ENCODE measurements at regions of chr16 and their contacts with region 1.

Region 1: GRCh38 chr16:30183233-30184095 is at the start of gene CORO1A:
- DNase-seq: peak; percentile 91
- ATAC-seq: peak; percentile 32
- H3K4me3 Mint-ChIP-seq: peak within 1 kb of the TSS; percentile 100
- H3K27ac Mint-ChIP-seq: peak within 1 kb of the TSS; percentile 100
- H3K4me1 Mint-ChIP-seq: peaks cover 29% of the 10 kb centered on the region
- H3K27me3 Mint-ChIP-seq: no peaks in the 10 kb centered on the region
- total RNA-seq, gene CORO1A: 1,426 to 1,488 TPM

Region 2: DNA sequence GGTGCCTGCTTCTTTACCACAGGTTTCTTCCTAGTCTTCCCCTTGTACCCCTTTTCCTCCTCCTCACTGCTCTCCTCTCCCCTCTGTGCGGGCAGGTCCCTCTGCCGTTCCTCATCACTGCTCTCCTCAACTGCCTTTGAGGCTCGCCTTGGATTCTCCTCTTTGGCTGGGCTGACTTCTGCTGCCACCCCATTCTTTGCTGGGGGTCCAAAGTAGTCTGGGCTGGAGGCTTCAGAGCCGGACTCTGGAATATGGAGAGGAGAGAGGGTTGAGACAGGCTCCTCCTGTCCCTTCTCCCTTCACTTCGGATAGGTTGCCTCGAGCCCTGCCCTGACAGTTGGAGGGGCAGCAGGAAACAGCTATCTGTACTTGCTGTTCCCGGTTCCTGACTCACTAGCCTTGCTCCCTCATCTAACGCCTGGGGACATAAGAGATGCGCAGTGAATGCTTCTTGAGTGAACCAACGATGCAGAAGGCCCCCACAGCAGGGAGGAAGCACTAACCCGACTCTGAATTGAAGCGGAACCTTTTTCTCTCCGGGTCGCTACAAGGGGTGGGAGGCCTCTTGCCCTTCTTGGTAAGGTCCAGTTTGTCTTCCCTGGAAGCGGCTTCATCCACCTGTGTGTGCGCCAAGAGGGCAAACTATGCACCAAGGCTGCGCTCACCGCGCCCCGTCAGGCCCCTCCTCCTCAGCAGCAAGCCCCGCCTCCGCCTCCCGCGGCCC is 188.7 kb before region 1 on chr16:
- POLR2A ChIA-PET with region 1: no interaction called
- DNase-seq: peak; percentile 85
- ATAC-seq: peak; percentile 54
- H3K4me3 Mint-ChIP-seq: peak overlapping the region; percentile 98
- H3K27ac Mint-ChIP-seq: peak overlapping the region; percentile 97
- H3K4me1 Mint-ChIP-seq: peaks cover 24% of the 10 kb centered on the region
- H3K27me3 Mint-ChIP-seq: no peaks in the 10 kb centered on the region

Region 3: GRCh38 chr16:30028438-30029076 is 154.9 kb before region 1 on chr16:
- POLR2A ChIA-PET with region 1: no interaction called
- DNase-seq: peak; percentile 63
- ATAC-seq: peak; percentile 47
- H3K4me3 Mint-ChIP-seq: no peak overlapping the region
- H3K27ac Mint-ChIP-seq: no peak overlapping the region
- H3K4me1 Mint-ChIP-seq: peaks cover 6% of the 10 kb centered on the region
- H3K27me3 Mint-ChIP-seq: peaks cover 50% of the 10 kb centered on the region

Region 4: GRCh38 chr16:30075507-30076275 is 107.8 kb before region 1 on chr16 and contains the start of gene PPP4C:
- POLR2A ChIA-PET with region 1: interaction called, 18 read pairs
- DNase-seq: peak; percentile 96
- ATAC-seq: peak; percentile 85
- H3K4me3 Mint-ChIP-seq: peak within 1 kb of the TSS; percentile 88
- H3K27ac Mint-ChIP-seq: peak within 1 kb of the TSS; percentile 93
- H3K4me1 Mint-ChIP-seq: peaks cover 29% of the 10 kb centered on the region
- H3K27me3 Mint-ChIP-seq: no peaks in the 10 kb centered on the region
- total RNA-seq, gene PPP4C: 123 to 133 TPM

Region 5: DNA sequence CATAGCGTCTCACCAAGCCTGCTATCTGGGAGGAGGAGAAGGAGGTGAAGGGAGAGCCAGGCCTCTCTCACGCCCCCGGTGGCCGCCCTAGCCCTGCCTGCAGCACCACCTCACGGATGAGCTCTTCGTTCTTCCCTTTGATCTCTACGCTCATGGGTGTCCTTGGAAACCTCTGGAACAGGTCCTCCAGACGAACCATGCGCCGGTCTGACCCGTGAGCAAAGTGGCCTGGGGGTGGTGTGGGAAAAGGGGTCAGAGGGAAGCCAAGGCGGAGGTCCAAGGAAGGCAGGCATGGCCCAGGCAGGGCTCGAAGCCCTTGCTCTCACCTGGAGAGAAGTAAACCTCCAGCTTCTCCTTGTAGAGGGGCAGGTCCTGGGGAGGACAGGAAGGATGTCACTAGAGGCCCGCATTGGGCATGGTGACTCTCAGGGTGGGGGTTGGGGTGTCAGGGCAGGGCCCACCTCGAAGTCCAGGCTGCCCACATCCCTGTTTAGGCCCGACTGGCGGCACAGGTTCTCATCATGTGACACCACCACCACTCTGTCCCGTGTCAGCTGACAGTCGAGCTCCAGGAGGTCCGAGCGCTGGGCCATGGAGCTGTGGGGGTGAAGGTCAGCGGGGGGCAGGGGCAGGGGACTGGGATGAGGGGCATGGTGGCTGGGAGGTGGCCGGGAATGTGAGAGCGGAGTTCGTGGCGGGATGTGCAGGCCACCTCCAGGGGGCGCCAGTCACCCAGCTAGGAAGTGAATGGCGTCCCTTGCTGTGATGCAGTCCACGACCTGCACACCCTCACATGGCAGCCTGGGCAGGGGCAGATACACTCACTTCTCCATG is 71.0 kb before region 1 on chr16:
- POLR2A ChIA-PET with region 1: interaction called, 30 read pairs
- DNase-seq: peak; percentile 75
- ATAC-seq: peak; percentile 50
- H3K4me3 Mint-ChIP-seq: no peak overlapping the region
- H3K27ac Mint-ChIP-seq: peak overlapping the region; percentile 64
- H3K4me1 Mint-ChIP-seq: peaks cover 9% of the 10 kb centered on the region
- H3K27me3 Mint-ChIP-seq: no peaks in the 10 kb centered on the region

Region 6: GRCh38 chr16:30131869-30132475 is 51.5 kb before region 1 on chr16:
- POLR2A ChIA-PET with region 1: interaction called, 66 read pairs
- DNase-seq: no peak
- ATAC-seq: no peak
- H3K4me3 Mint-ChIP-seq: no peak overlapping the region
- H3K27ac Mint-ChIP-seq: peak overlapping the region; percentile 60
- H3K4me1 Mint-ChIP-seq: peaks cover 14% of the 10 kb centered on the region
- H3K27me3 Mint-ChIP-seq: no peaks in the 10 kb centered on the region

Region 7: DNA sequence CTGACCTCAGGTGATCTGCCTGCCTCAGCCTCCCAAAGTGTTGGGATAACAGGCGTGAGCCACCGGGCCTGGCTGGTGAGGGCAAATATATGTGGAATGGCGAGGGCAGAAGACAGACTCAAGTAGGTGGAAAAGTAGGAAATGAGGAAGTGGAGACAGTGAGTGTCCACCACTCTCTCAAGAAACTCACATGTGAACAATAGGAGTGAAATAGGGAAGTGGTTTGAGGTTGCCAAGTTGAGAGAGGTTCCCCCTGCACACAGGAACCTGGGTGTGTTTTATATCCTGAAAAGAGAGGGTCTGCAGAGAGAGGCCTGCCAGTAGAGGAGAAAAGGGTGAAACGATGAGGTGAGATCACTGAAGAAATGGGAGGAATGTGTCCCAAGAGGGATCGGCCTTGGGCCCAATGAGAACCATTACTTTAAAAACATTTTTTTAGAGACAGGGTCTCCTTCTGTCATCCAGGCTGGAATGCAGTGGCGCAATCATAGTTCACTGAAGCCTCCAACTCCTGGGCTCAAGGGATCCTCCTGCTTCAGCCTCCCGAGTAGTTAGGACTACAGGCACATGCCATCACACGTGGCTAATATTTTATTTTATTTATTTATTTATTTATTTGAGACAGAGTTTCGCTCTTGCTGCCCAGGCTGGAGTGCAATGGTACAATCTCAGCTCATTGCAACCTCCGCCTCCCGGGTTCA is 17.1 kb before region 1 on chr16:
- POLR2A ChIA-PET with region 1: interaction called, 45 read pairs
- DNase-seq: peak; percentile 37
- ATAC-seq: peak; percentile 88
- H3K4me3 Mint-ChIP-seq: peak overlapping the region; percentile 68
- H3K27ac Mint-ChIP-seq: peak overlapping the region; percentile 77
- H3K4me1 Mint-ChIP-seq: peaks cover 30% of the 10 kb centered on the region
- H3K27me3 Mint-ChIP-seq: no peaks in the 10 kb centered on the region

Region 8: GRCh38 chr16:30378236-30379204 is 195.1 kb after region 1 on chr16:
- POLR2A ChIA-PET with region 1: interaction called, 11 read pairs
- DNase-seq: peak; percentile 99
- ATAC-seq: peak; percentile 80
- H3K4me3 Mint-ChIP-seq: peak overlapping the region; percentile 93
- H3K27ac Mint-ChIP-seq: peak overlapping the region; percentile 98
- H3K4me1 Mint-ChIP-seq: peaks cover 34% of the 10 kb centered on the region
- H3K27me3 Mint-ChIP-seq: no peaks in the 10 kb centered on the region

Region 9: DNA sequence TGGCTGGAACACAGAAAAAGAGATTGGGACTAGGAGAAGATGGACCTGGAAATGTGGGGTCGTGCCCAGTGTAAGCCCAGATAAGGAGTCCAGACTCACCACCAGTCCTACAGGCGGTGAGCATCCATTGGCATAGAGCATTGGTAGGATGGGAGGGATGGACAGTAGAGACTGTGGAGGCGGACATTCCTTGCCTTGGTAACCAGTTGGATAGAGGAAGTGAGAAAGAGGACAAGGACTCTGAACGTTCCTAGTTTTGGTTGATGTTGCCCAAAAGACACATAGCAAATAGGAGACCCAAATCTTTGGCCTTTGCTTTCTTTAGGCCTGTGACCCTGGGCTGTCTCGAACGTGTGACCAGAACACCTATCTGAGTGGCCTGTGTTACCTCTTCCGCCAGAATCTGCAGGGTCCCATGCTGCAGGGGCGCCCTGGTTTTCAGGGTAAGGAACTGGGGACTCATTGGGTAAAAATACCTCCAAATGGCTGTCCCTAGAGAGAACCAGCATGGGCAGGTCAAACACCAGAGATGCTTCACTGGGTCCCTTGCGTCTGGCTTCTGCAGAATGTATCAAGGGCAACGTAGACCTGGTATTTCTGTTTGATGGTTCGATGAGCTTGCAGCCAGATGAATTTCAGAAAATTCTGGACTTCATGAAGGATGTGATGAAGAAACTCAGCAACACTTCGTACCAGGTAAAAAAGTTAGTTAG is 295.5 kb after region 1 on chr16:
- POLR2A ChIA-PET with region 1: no interaction called
- DNase-seq: no peak
- ATAC-seq: no peak
- H3K4me3 Mint-ChIP-seq: peak overlapping the region; percentile 3
- H3K27ac Mint-ChIP-seq: peak overlapping the region; percentile 75
- H3K4me1 Mint-ChIP-seq: peaks cover 46% of the 10 kb centered on the region
- H3K27me3 Mint-ChIP-seq: no peaks in the 10 kb centered on the region